ENCODE measurements at regions of chr9 and their contacts with region 1.

Region 1: GRCh38 chr9:97602430-97602829 is 30.7 kb downstream of the TSTD2 start:
- DNase-seq: no peak
- H3K4me3 ChIP-seq: no peak overlapping the region
- H3K27ac ChIP-seq: no peak overlapping the region
- H3K4me1 ChIP-seq: peaks cover 4 to 16% (median 10%) of the 10 kb centered on the region in 4 donors
- H3K27me3 ChIP-seq: no peaks in the 10 kb centered on the region
- CTCF ChIP-seq: no peak
- EP300 ChIP-seq: no peak
- POLR2A ChIP-seq: no peak

Region 2: DNA sequence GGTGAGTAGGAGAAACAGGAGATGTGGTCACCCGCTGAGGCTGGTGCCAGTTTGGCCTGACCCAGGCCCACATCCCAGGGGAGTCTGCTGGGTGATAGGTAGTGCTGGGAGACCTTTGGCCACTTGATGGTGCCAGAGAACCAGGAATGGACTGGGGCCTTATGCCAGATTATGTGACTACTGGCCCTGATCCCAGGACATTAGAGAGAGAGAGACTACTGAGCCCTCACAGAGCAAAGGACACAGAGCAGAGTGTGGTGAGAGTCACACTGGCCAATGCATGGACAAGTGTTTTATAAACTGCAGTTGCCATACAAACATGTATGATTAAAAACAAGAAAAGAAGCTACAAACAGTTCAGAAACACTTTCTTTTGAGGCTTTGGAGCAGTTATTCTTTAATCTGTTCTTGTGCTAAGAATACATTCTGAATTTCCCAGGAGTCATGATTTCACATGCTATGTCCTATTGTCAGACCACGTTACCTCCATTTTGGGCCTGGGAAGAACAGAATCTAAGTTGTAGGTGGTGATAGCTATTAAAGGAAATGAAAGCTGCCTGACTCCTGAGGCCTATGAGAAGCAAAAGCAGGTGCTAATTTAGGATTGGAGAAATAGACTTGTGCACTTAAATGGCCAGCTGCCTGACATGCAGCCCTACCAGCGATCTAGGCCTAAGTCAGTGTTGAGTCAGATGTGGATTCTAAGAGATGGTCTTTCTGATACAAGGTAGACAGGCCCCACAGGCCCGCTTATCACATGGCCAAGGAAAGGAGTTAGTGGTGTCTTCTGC is 133.6 kb before region 1 on chr9:
- intact Hi-C with region 1: loop called (anchors 5 kb)
- DNase-seq: peak; percentile 84
- H3K4me3 ChIP-seq: no peak overlapping the region
- H3K27ac ChIP-seq: peak overlapping the region in 4 of 5 donors; percentile 23 to 61 (median 28)
- H3K4me1 ChIP-seq: peaks cover 6 to 32% (median 16%) of the 10 kb centered on the region in 4 donors
- H3K27me3 ChIP-seq: no peaks in the 10 kb centered on the region
- CTCF ChIP-seq: peak in 5 of 7 experiments; percentile 66 to 90 (median 81)
- EP300 ChIP-seq: no peak
- POLR2A ChIP-seq: no peak

Measured in stomach (tissue), 19 donors.